ENCODE measurements at regions of chrX and their contacts with region 1.

Region 1: DNA sequence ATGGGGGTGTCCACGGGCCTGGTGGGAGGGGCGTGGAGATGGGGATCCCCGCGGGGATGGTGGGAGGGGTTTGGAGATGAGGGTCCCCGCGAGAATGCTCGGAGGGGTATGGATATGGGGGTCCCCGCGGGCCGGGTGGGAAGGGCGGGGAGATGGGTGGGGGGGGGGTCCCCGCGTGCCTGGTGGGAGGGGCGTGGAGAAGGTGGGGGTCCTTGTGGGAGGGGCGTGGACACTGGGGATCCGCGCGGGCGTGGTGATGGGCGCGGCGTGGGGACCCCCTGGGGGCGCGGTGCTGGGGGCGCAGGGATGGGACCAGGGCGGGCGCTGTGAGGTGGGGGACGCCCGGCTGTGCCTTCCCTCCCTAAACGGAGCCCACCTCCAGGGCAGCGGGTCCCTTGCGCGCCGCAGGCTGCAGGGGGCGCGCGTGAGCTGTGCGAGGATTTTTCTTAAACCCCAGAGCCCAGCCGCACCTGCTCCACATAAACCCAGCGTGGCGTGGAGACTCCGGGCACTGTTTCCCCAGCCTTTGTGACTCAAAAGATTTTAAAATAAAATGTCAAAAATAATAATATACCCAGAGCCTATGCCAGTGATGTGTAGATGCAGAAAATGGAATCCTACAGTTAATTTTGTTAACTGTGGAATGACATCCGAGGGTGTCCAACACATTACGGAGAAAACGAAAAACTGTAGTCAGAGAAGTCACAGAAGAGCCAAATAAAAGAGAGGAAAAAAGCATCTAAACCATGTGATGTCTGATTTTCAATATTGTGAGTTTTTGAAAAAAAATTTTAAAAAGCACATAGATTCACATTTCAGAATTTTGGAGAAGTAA is 1.5 kb upstream of the ASMTL start:
- DNase-seq: peak; percentile 83 to 97 (median 92)
- ATAC-seq: peak; percentile 45
- H3K4me3 ChIP-seq: peak overlapping the region; percentile 59
- H3K4me3 Mint-ChIP-seq: peak overlapping the region; percentile 85
- H3K27ac ChIP-seq: peak overlapping the region in 1 of 2 donors; percentile 94
- H3K27ac Mint-ChIP-seq: peak overlapping the region; percentile 72
- H3K4me1 ChIP-seq: peaks cover 47% of the 10 kb centered on the region
- H3K4me1 Mint-ChIP-seq: peaks cover 22% of the 10 kb centered on the region
- H3K27me3 ChIP-seq: no peaks in the 10 kb centered on the region
- H3K27me3 Mint-ChIP-seq: no peaks in the 10 kb centered on the region
- CTCF ChIP-seq: peak; percentile 98

Region 2: GRCh38 chrX:1391707-1392375 is 62.3 kb before region 1 on chrX and contains the start of gene SLC25A6:
- CTCF ChIA-PET with region 1: no interaction called
- POLR2A ChIA-PET with region 1: no interaction called
- intact Hi-C with region 1: loop called (anchors 2 to 5 kb)
- DNase-seq: peak; percentile 98 to 100 (median 99)
- ATAC-seq: peak; percentile 95
- H3K4me3 ChIP-seq: peak within 1 kb of the TSS; percentile 84
- H3K4me3 Mint-ChIP-seq: peak within 1 kb of the TSS; percentile 92
- H3K27ac ChIP-seq: peak within 1 kb of the TSS; percentile 87 to 98
- H3K27ac Mint-ChIP-seq: peak within 1 kb of the TSS; percentile 85
- H3K4me1 ChIP-seq: peaks cover 48% of the 10 kb centered on the region
- H3K4me1 Mint-ChIP-seq: peaks cover 42% of the 10 kb centered on the region
- H3K27me3 ChIP-seq: peaks cover 0 to 2% of the 10 kb centered on the region in 2 experiments
- H3K27me3 Mint-ChIP-seq: no peaks in the 10 kb centered on the region
- CTCF ChIP-seq: peak; percentile 28
- total RNA-seq, gene SLC25A6: 338 to 340 TPM

Region 3: GRCh38 chrX:1472975-1473374 is 18.8 kb after region 1 on chrX:
- CTCF ChIA-PET with region 1: no interaction called
- POLR2A ChIA-PET with region 1: no interaction called
- intact Hi-C with region 1: no loop called
- DNase-seq: peak in 1 of 14 experiments; percentile 11
- ATAC-seq: no peak
- H3K4me3 ChIP-seq: no peak overlapping the region
- H3K4me3 Mint-ChIP-seq: no peak overlapping the region
- H3K27ac ChIP-seq: no peak overlapping the region
- H3K27ac Mint-ChIP-seq: peak overlapping the region; percentile 91
- H3K4me1 ChIP-seq: peaks cover 74% of the 10 kb centered on the region
- H3K4me1 Mint-ChIP-seq: peaks cover 71% of the 10 kb centered on the region
- H3K27me3 ChIP-seq: no peaks in the 10 kb centered on the region
- H3K27me3 Mint-ChIP-seq: no peaks in the 10 kb centered on the region
- CTCF ChIP-seq: no peak

Region 4: GRCh38 chrX:1537035-1537715 is 83.0 kb after region 1 on chrX and contains the start of gene P2RY8:
- CTCF ChIA-PET with region 1: no interaction called
- POLR2A ChIA-PET with region 1: no interaction called
- intact Hi-C with region 1: loop called (anchors 2 kb)
- DNase-seq: peak; percentile 66 to 89 (median 76)
- ATAC-seq: peak; percentile 77
- H3K4me3 ChIP-seq: peak within 1 kb of the TSS; percentile 97
- H3K4me3 Mint-ChIP-seq: peak within 1 kb of the TSS; percentile 98
- H3K27ac ChIP-seq: peak within 1 kb of the TSS; percentile 82 to 88
- H3K27ac Mint-ChIP-seq: peak within 1 kb of the TSS; percentile 98
- H3K4me1 ChIP-seq: peaks cover 32% of the 10 kb centered on the region
- H3K4me1 Mint-ChIP-seq: peaks cover 26% of the 10 kb centered on the region
- H3K27me3 ChIP-seq: no peaks in the 10 kb centered on the region
- H3K27me3 Mint-ChIP-seq: no peaks in the 10 kb centered on the region
- CTCF ChIP-seq: peak; percentile 19
- total RNA-seq, gene P2RY8: 139 TPM

Region 5: GRCh38 chrX:1591102-1591900 is 137.1 kb after region 1 on chrX and contains the start of gene AKAP17A:
- CTCF ChIA-PET with region 1: no interaction called
- POLR2A ChIA-PET with region 1: no interaction called
- intact Hi-C with region 1: loop called in 1 of 2 experiments (anchors 1 kb)
- DNase-seq: peak; percentile 93 to 100 (median 98)
- ATAC-seq: peak; percentile 89
- H3K4me3 ChIP-seq: peak within 1 kb of the TSS; percentile 80
- H3K4me3 Mint-ChIP-seq: peak within 1 kb of the TSS; percentile 95
- H3K27ac ChIP-seq: peak within 1 kb of the TSS; percentile 53 to 55
- H3K27ac Mint-ChIP-seq: peak within 1 kb of the TSS; percentile 90
- H3K4me1 ChIP-seq: peaks cover 42% of the 10 kb centered on the region
- H3K4me1 Mint-ChIP-seq: peaks cover 43% of the 10 kb centered on the region
- H3K27me3 ChIP-seq: no peaks in the 10 kb centered on the region
- H3K27me3 Mint-ChIP-seq: no peaks in the 10 kb centered on the region
- CTCF ChIP-seq: no peak
- total RNA-seq, gene AKAP17A: 143 to 149 TPM

Region 6: GRCh38 chrX:1657367-1658070 is 203.4 kb after region 1 on chrX:
- CTCF ChIA-PET with region 1: no interaction called
- POLR2A ChIA-PET with region 1: no interaction called
- intact Hi-C with region 1: loop called in 1 of 2 experiments (anchors 1 kb)
- DNase-seq: peak in 13 of 14 experiments; percentile 11 to 91 (median 47)
- ATAC-seq: peak; percentile 37
- H3K4me3 ChIP-seq: peak overlapping the region; percentile 65
- H3K4me3 Mint-ChIP-seq: peak overlapping the region; percentile 87
- H3K27ac ChIP-seq: peak overlapping the region; percentile 59 to 80
- H3K27ac Mint-ChIP-seq: peak overlapping the region; percentile 96
- H3K4me1 ChIP-seq: peaks cover 36% of the 10 kb centered on the region
- H3K4me1 Mint-ChIP-seq: peaks cover 52% of the 10 kb centered on the region
- H3K27me3 ChIP-seq: no peaks in the 10 kb centered on the region
- H3K27me3 Mint-ChIP-seq: no peaks in the 10 kb centered on the region
- CTCF ChIP-seq: no peak

Region 7: GRCh38 chrX:2608638-2609430 is 1154.7 kb after region 1 on chrX:
- CTCF ChIA-PET with region 1: no interaction called
- POLR2A ChIA-PET with region 1: no interaction called
- intact Hi-C with region 1: loop called in 1 of 2 experiments (anchors 5 kb)
- DNase-seq: peak; percentile 73 to 94 (median 84)
- ATAC-seq: peak; percentile 94
- H3K4me3 ChIP-seq: peak overlapping the region; percentile 96
- H3K4me3 Mint-ChIP-seq: peak overlapping the region; percentile 98
- H3K27ac ChIP-seq: peak overlapping the region; percentile 14 to 43
- H3K27ac Mint-ChIP-seq: peak overlapping the region; percentile 82
- H3K4me1 ChIP-seq: peaks cover 34% of the 10 kb centered on the region
- H3K4me1 Mint-ChIP-seq: peaks cover 63% of the 10 kb centered on the region
- H3K27me3 ChIP-seq: no peaks in the 10 kb centered on the region
- H3K27me3 Mint-ChIP-seq: no peaks in the 10 kb centered on the region
- CTCF ChIP-seq: no peak

Region 8: DNA sequence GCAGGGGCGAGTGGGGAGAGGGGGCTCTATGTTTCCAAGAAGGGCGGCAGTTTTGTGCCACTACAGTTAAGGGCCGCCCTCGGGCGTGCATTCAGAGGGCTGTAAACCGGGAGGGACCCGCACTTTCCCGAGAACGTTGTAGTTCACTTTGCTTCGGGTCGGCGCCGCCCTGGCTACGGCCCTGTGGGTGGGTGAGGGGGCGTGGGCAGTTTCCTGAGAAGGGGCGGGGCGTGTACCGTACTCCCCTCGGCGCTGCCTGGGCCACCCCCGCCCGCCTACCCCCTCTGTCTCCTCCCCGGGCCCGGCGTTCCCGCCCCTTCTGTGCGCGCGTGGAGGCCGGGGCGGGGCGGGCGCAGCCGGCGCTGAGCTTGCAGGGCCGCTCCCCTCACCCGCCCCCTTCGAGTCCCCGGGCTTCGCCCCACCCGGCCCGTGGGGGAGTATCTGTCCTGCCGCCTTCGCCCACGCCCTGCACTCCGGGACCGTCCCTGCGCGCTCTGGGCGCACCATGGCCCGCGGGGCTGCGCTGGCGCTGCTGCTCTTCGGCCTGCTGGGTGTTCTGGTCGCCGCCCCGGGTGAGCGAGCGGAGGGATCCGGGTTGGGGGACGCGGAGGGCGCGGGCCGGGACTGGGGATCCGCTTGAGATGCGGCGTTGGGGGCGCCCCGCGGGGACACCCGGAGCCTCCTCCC is 1236.8 kb after region 1 on chrX and contains the start of gene CD99:
- CTCF ChIA-PET with region 1: no interaction called
- POLR2A ChIA-PET with region 1: no interaction called
- intact Hi-C with region 1: loop called in 1 of 2 experiments (anchors 5 kb)
- DNase-seq: peak; percentile 79 to 96 (median 89)
- ATAC-seq: peak; percentile 85
- H3K4me3 ChIP-seq: peak within 1 kb of the TSS; percentile 96
- H3K4me3 Mint-ChIP-seq: peak within 1 kb of the TSS; percentile 95
- H3K27ac ChIP-seq: peak within 1 kb of the TSS; percentile 61 to 62
- H3K27ac Mint-ChIP-seq: peak within 1 kb of the TSS; percentile 83
- H3K4me1 ChIP-seq: peaks cover 47% of the 10 kb centered on the region
- H3K4me1 Mint-ChIP-seq: peaks cover 40% of the 10 kb centered on the region
- H3K27me3 ChIP-seq: no peaks in the 10 kb centered on the region
- H3K27me3 Mint-ChIP-seq: no peaks in the 10 kb centered on the region
- CTCF ChIP-seq: no peak
- total RNA-seq, gene CD99: 170 to 184 TPM